ENCODE measurements at regions of chr22 and their contacts with region 1.

Region 1: DNA sequence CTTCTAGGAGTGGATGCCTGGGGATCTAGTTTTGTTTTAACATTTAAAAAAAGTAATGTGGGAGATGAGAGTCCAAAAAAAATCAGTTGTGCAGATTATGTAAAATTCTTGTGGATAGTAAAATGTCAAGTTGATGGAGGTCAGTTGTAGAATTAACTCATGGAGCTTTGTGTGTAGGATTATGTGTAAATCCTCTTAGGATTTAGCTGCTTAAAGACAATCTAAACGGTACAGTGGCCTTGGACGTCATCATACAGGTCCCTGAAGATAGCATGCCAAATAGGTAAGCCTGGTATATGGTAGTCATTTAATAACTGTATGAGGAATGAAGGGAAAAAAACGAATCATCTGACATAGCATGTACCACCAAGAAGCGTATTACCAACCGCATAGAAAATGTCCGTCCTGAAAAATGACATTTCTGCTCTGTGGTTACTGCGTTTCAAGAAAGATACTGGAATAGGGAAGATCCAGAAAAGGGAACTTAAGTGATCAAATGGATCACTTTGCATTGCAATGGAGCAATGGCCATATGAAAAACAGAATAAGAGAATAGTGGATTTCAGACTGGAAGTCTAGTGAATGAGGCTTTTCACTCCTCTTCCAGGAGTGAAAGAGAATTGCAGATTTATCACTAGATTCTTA is 61.3 kb downstream of the BCL2L13 start:
- DNase-seq: no peak
- ATAC-seq: no peak
- H3K4me3 ChIP-seq: no peak overlapping the region
- H3K27ac ChIP-seq: no peak overlapping the region
- H3K4me1 ChIP-seq: no peaks in the 10 kb centered on the region
- H3K27me3 ChIP-seq: no peaks in the 10 kb centered on the region
- CTCF ChIP-seq: no peak
- EP300 ChIP-seq: no peak
- POLR2A ChIP-seq: no peak
- RAD21 ChIP-seq: no peak

Region 2: GRCh38 chr22:17655289-17655688 is 44.5 kb before region 1 on chr22:
- CTCF ChIA-PET with region 1: no interaction called
- POLR2A ChIA-PET with region 1: no interaction called
- in situ Hi-C with region 1: loop called (anchors 5 kb)
- intact Hi-C with region 1: loop called (anchors 1 kb)
- DNase-seq: no peak
- ATAC-seq: no peak
- H3K4me3 ChIP-seq: no peak overlapping the region
- H3K27ac ChIP-seq: no peak overlapping the region
- H3K4me1 ChIP-seq: no peaks in the 10 kb centered on the region
- H3K27me3 ChIP-seq: no peaks in the 10 kb centered on the region
- CTCF ChIP-seq: no peak
- EP300 ChIP-seq: no peak
- POLR2A ChIP-seq: no peak
- RAD21 ChIP-seq: no peak

Region 3: DNA sequence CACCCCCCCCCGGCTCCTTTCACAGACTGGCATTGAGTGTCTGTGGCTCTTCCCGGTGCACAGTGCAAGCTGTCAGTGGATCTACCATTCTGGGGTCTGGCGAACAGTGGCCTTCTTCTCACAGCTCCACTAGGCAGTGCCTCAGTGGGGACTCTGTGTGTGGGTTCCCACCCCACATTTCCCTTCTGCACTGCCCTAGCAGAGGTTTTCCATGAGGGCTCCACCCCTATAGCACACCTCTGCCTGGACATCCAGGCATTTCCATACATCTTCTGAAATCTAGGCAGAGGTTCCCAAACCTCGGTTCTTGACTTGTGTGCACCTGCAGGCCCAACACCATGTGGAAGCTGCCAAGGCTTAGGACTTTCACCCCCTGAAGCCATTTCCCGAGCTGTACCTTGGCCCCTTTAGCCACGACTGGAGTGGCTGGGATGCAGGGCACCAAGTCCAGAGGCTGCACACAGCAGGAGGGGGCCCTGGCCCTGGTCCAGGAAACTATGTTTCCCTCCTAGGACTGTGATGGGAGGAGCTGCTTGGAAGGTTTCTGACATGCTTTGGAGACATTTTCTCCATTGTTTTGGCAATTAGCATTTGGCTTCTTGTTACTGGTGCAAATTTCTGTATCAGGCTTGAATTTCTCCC is 35.3 kb before region 1 on chr22:
- CTCF ChIA-PET with region 1: no interaction called
- POLR2A ChIA-PET with region 1: no interaction called
- in situ Hi-C with region 1: loop called (anchors 5 kb)
- intact Hi-C with region 1: no loop called
- DNase-seq: peak; percentile 15
- ATAC-seq: peak; percentile 72
- H3K4me3 ChIP-seq: no peak overlapping the region
- H3K27ac ChIP-seq: peak overlapping the region; percentile 22
- H3K4me1 ChIP-seq: peaks cover 18% of the 10 kb centered on the region
- H3K27me3 ChIP-seq: no peaks in the 10 kb centered on the region; a peak in 1 of 5 replicates
- CTCF ChIP-seq: no peak
- EP300 ChIP-seq: no peak
- POLR2A ChIP-seq: no peak
- RAD21 ChIP-seq: no peak